Transverse colon (tissue), 4 donors: ENCODE measurements at regions of chr2 and their contacts with region 1.

Region 1: DNA sequence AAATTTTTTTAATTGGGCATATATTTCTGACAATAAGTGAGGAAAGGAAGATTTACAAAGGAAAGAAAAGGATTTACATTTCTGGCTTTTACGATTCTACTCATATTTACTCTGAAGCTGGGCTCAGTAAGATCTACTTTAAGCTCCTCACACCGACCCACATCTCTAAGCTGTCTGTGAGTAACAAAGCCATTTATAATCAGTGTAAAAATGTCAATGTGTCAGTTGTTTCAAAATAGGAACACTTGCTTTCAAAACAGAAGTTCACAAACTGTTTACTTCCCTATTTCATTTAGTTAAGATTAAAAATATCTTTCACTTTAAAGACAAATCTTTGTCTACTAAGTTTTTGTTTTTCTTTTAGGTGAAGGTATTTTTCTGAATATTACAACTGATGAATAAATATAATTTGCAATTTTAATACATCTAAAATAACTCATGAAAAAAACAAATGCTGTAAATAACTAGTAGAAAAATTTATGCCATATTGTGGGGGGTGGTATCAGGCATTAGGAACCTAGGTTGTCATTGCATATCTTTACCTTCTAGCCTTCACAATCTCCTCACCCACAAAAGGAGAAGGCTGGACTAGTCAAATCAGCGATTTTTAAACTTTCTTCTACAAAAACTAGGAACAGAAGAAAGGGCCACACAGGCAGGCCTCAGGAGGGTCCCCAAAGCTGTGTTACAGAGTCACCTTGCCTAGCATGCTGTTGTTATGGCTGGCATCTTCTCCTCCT is 64.5 kb downstream of the TMEM131 start:
- DNase-seq: no peak
- H3K4me3 ChIP-seq: no peak overlapping the region
- H3K27ac ChIP-seq: no peak overlapping the region
- H3K4me1 ChIP-seq: peaks cover 20 to 51% (median 28%) of the 10 kb centered on the region in 4 donors
- H3K27me3 ChIP-seq: no peaks in the 10 kb centered on the region
- CTCF ChIP-seq: no peak
- EP300 ChIP-seq: no peak
- POLR2A ChIP-seq: no peak

Region 2: DNA sequence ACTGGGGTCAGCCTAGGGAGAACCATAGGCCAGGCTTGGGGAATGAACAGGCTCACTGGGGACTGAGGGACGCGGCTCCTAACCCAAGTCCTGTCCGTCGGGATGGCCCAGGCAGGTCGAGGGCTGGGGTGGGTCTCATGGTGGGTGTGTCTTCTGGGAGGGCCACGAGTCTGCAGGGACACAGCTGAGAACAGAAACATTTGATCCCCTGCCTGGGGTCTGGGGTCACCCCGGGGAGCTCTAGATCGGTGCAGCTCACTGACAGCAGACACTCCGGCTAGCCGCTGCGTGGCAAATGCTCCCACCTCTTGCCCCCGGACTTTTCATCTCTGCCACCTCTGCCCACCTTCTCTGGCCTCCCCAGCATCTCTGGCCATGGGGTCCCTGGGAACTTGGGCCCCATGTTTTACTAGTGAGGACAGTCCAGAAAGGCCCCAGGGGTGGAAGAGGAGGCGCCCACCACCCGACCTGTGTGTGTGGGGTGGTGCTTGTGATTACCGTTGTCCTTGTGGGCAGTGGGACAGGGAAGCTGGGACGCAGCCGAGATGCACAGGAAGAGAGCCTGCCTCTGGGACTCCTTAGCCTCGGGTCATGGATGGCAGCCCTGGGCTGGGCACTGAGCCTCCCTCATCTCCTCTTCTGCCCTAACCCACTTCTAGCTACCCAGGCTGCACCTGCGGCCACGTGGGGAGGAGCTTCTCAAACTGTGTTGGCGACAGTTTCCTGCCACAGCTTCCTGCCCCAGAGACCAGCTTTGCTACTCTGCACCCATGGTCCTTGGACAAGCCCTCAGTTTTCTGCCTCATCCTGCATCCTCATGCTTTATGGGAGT is 213.0 kb before region 1 on chr2:
- in situ Hi-C with region 1: no loop called
- intact Hi-C with region 1: no loop called
- DNase-seq: peak; percentile 58
- H3K4me3 ChIP-seq: peak overlapping the region in 1 of 4 donors; percentile 4
- H3K27ac ChIP-seq: peak overlapping the region in 1 of 4 donors; percentile 21
- H3K4me1 ChIP-seq: no peaks in the 10 kb centered on the region
- H3K27me3 ChIP-seq: no peaks in the 10 kb centered on the region
- CTCF ChIP-seq: no peak
- EP300 ChIP-seq: no peak
- POLR2A ChIP-seq: no peak

Region 3: GRCh38 chr2:98040331-98040939 is 109.1 kb after region 1 on chr2:
- in situ Hi-C with region 1: no loop called
- intact Hi-C with region 1: loop called (anchors 5 kb)
- DNase-seq: no peak
- H3K4me3 ChIP-seq: no peak overlapping the region
- H3K27ac ChIP-seq: peak overlapping the region in 1 of 4 donors; percentile 42
- H3K4me1 ChIP-seq: peaks cover 14 to 50% (median 37%) of the 10 kb centered on the region in 4 donors
- H3K27me3 ChIP-seq: no peaks in the 10 kb centered on the region
- CTCF ChIP-seq: no peak
- EP300 ChIP-seq: no peak
- POLR2A ChIP-seq: no peak

Region 4: GRCh38 chr2:98114643-98115330 is 183.5 kb after region 1 on chr2:
- in situ Hi-C with region 1: no loop called
- intact Hi-C with region 1: no loop called
- DNase-seq: peak; percentile 22
- H3K4me3 ChIP-seq: no peak overlapping the region
- H3K27ac ChIP-seq: peak overlapping the region; percentile 39 to 72 (median 60)
- H3K4me1 ChIP-seq: peaks cover 0 to 10% (median 6%) of the 10 kb centered on the region in 4 donors
- H3K27me3 ChIP-seq: no peaks in the 10 kb centered on the region
- CTCF ChIP-seq: no peak
- EP300 ChIP-seq: no peak
- POLR2A ChIP-seq: no peak